Naive thymus-derived CD4-positive, alpha-beta T cell (primary cell): ENCODE measurements at regions of chr14 and their contacts with region 1.

Region 1: DNA sequence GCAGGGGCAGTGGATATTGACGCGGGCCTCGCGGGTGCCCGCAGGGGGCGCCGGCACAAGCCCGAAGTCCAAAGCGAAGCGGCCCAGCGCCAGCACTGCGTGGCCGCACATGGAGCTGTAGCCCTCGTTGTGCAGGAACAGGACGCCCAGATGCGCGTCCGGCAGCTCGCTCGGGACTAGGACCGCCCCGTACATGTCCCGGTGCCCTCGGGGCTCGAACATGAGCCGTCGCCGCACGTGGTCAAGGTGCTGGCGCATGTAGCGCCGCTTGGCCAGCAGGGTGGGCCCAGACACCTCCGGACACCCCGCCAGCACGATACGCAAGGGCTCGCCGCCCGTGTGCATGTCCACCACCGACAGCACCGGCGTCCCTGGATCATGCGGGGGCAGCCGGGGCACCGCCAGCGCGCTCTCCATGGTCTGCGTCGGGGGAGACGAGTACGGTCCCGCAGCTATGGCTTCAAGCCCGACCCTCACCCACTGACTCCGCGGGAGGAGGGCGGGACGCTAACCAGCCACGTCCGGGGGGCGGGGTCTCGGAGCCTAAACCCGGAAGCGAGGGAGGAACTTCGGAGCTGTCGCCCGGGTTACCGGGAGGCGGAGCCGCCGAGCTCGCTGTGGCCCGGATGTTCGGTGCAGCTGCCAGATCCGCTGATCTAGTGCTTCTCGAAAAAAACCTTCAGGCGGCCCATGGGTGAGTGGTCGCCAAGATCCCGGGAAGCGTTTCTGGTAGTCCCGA is at the starts of genes JKAMP and L3HYPDH:
- DNase-seq: peak; percentile 93 to 98 (median 97)
- ATAC-seq: peak; percentile 97
- H3K4me3 ChIP-seq: peak within 1 kb of the TSS; percentile 81
- H3K4me3 Mint-ChIP-seq: peak within 1 kb of the TSS; percentile 89 to 98 (median 96)
- H3K27ac ChIP-seq: peak within 1 kb of the TSS; percentile 84
- H3K27ac Mint-ChIP-seq: peak within 1 kb of the TSS; percentile 85 to 96 (median 94)
- H3K4me1 ChIP-seq: peaks cover 18 to 20% of the 10 kb centered on the region in 2 donors
- H3K4me1 Mint-ChIP-seq: peaks cover 44 to 82% (median 76%) of the 10 kb centered on the region in 7 donors
- H3K27me3 ChIP-seq: no peaks in the 10 kb centered on the region
- H3K27me3 Mint-ChIP-seq: no peaks in the 10 kb centered on the region
- total RNA-seq, gene JKAMP: 12.2 to 33.7 (median 32.5) TPM
- total RNA-seq, gene L3HYPDH: 18.9 to 55.9 (median 24.2) TPM

Region 2: GRCh38 chr14:58244556-58245387 is 1239.3 kb before region 1 on chr14 and contains the start of gene PSMA3:
- CTCF ChIA-PET with region 1: no interaction called
- POLR2A ChIA-PET with region 1: no interaction called
- intact Hi-C with region 1: loop called in 1 of 2 experiments (anchors 10 kb)
- DNase-seq: peak; percentile 95 to 98 (median 98)
- ATAC-seq: peak; percentile 96
- H3K4me3 ChIP-seq: peak within 1 kb of the TSS; percentile 100
- H3K4me3 Mint-ChIP-seq: peak within 1 kb of the TSS; percentile 89 to 99 (median 96)
- H3K27ac ChIP-seq: peak within 1 kb of the TSS; percentile 86
- H3K27ac Mint-ChIP-seq: peak within 1 kb of the TSS; percentile 97 to 99 (median 98)
- H3K4me1 ChIP-seq: peaks cover 23 to 26% of the 10 kb centered on the region in 2 donors
- H3K4me1 Mint-ChIP-seq: peaks cover 27 to 61% (median 52%) of the 10 kb centered on the region in 7 donors
- H3K27me3 ChIP-seq: no peaks in the 10 kb centered on the region
- H3K27me3 Mint-ChIP-seq: peaks cover 0 to 1% (median 0%) of the 10 kb centered on the region in 5 donors
- total RNA-seq, gene PSMA3: 76.5 to 357 (median 97.1) TPM

Region 3: DNA sequence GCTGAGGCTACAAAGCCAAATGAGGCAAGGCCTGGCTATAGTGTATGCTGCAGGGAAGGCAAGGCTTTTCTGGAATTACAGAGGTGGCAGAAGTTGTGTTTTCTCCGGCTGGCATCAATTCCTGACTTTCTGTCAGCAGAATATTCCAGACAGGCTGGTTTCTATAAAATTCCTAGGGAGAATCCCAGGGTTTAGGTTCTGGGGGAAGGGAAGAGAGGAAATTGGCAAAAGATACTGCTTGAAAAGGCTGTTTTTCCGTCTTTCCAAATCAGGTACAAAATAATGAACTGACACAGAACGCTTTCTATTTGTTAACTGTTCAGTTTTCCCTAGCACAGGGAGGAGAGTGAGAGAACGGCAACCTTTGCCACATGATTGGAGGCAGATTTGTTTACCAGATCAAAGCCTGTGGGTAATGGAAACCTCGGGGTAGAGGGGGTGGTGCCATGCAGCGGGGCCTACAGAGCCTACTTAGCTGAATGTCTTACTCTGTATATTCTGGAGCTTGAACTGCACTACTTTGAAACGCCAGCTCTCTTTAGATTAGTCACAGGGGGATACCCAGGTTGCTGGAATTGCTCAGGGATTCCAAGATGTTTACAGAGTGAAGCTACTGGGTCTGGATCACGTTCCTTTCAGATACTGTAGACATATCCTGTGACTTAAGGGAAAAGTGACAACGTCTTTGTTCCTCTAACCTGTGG is 912.1 kb before region 1 on chr14:
- CTCF ChIA-PET with region 1: no interaction called
- POLR2A ChIA-PET with region 1: no interaction called
- intact Hi-C with region 1: loop called in 1 of 2 experiments (anchors 5 kb)
- DNase-seq: peak in 8 of 9 donors; percentile 41 to 80 (median 69)
- ATAC-seq: peak; percentile 87
- H3K4me3 ChIP-seq: no peak overlapping the region
- H3K4me3 Mint-ChIP-seq: peak overlapping the region; percentile 35 to 83 (median 70)
- H3K27ac ChIP-seq: peak overlapping the region; percentile 40
- H3K27ac Mint-ChIP-seq: peak overlapping the region; percentile 74 to 96 (median 93)
- H3K4me1 ChIP-seq: peaks cover 0 to 33% of the 10 kb centered on the region in 2 donors
- H3K4me1 Mint-ChIP-seq: peaks cover 14 to 67% (median 51%) of the 10 kb centered on the region in 7 donors
- H3K27me3 ChIP-seq: no peaks in the 10 kb centered on the region
- H3K27me3 Mint-ChIP-seq: no peaks in the 10 kb centered on the region

Region 4: DNA sequence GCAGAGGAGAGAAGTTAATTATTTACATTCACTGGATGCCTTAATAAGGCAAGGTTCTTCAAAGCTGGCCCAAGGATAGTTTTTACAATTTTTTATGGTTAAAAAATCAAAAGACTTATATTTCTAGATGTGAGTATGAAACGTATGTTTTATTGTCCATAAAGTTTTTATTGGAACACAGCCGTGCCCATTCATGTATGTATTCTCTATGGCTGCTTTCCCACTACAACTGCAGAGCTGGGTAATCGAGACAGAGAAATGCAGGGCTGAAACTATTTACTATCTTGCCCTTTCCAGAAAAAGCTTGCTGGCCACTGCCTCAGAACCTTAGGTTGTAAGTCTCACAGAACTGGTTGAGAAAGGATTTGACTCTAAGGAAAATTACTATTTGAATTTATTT is 16.7 kb after region 1 on chr14:
- CTCF ChIA-PET with region 1: no interaction called
- POLR2A ChIA-PET with region 1: interaction called, 3 read pairs
- intact Hi-C with region 1: loop called in 1 of 2 experiments (anchors 2 kb)
- DNase-seq: no peak
- ATAC-seq: no peak
- H3K4me3 ChIP-seq: no peak overlapping the region
- H3K4me3 Mint-ChIP-seq: no peak overlapping the region
- H3K27ac ChIP-seq: no peak overlapping the region
- H3K27ac Mint-ChIP-seq: peak overlapping the region in 1 of 9 donors; percentile 38
- H3K4me1 ChIP-seq: peaks cover 0 to 4% of the 10 kb centered on the region in 2 donors
- H3K4me1 Mint-ChIP-seq: peaks cover 11 to 37% (median 23%) of the 10 kb centered on the region in 7 donors
- H3K27me3 ChIP-seq: no peaks in the 10 kb centered on the region
- H3K27me3 Mint-ChIP-seq: no peaks in the 10 kb centered on the region

Region 5: GRCh38 chr14:59534361-59534987 is 50.4 kb after region 1 on chr14:
- CTCF ChIA-PET with region 1: no interaction called
- POLR2A ChIA-PET with region 1: no interaction called
- intact Hi-C with region 1: no loop called
- DNase-seq: no peak
- ATAC-seq: no peak
- H3K4me3 ChIP-seq: no peak overlapping the region
- H3K4me3 Mint-ChIP-seq: no peak overlapping the region
- H3K27ac ChIP-seq: no peak overlapping the region
- H3K27ac Mint-ChIP-seq: no peak overlapping the region
- H3K4me1 ChIP-seq: no peaks in the 10 kb centered on the region
- H3K4me1 Mint-ChIP-seq: no peaks in the 10 kb centered on the region
- H3K27me3 ChIP-seq: no peaks in the 10 kb centered on the region
- H3K27me3 Mint-ChIP-seq: peaks cover 9 to 25% (median 18%) of the 10 kb centered on the region in 5 donors

Region 6: GRCh38 chr14:59964251-59965007 is 480.4 kb after region 1 on chr14:
- CTCF ChIA-PET with region 1: no interaction called
- POLR2A ChIA-PET with region 1: no interaction called
- intact Hi-C with region 1: loop called in 1 of 2 experiments (anchors 10 kb)
- DNase-seq: peak in 6 of 9 donors; percentile 6 to 38 (median 20)
- ATAC-seq: peak; percentile 44
- H3K4me3 ChIP-seq: no peak overlapping the region
- H3K4me3 Mint-ChIP-seq: peak overlapping the region; percentile 77 to 95 (median 88)
- H3K27ac ChIP-seq: no peak overlapping the region
- H3K27ac Mint-ChIP-seq: peak overlapping the region in 8 of 9 donors; percentile 40 to 99 (median 88)
- H3K4me1 ChIP-seq: no peaks in the 10 kb centered on the region
- H3K4me1 Mint-ChIP-seq: peaks cover 3 to 14% (median 10%) of the 10 kb centered on the region in 7 donors
- H3K27me3 ChIP-seq: no peaks in the 10 kb centered on the region
- H3K27me3 Mint-ChIP-seq: peaks cover 0 to 15% (median 5%) of the 10 kb centered on the region in 5 donors

Region 7: DNA sequence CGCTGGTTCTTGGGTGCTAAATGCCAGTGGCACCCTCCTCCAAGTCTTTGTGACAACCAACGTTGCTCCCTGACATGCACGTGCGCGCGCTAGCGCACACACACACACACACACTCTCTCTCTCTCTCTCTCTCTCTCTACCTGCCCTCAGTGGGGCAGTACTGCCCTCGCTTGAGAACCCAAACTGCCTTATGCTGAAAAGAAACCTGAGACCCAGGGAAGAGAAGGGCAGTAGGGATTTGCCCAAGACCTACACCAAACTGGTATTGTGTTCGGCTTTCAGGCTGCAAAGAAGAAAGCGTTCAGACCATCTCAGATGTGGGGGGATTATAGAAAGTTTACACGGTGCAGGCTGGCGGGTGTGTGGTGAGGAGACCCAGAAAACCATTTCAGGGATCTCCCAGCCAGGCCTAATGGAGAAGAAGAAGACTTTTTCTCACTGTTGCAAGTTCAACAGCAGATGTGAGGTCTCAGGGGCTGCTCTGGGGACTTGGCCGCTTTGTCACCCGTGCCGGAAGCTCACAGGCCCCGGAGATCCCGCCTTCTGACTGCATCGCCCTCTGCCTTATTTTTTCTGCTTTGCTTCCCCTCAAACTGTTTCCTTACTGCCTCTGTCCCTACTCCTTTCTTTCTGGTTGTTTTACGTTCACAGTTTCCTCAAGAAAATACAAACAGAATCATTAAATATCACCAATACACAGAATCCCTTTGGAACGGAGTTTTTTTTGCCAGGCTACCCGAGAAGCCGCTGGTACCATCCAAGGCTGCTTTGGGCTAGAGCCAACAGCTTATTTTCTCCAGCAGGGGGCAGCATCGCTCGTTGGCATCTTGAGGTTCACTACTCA is 847.4 kb after region 1 on chr14:
- CTCF ChIA-PET with region 1: no interaction called
- POLR2A ChIA-PET with region 1: no interaction called
- intact Hi-C with region 1: loop called (anchors 2 to 5 kb)
- DNase-seq: peak; percentile 53 to 80 (median 74)
- ATAC-seq: peak; percentile 79
- H3K4me3 ChIP-seq: peak overlapping the region; percentile 55
- H3K4me3 Mint-ChIP-seq: peak overlapping the region; percentile 87 to 98 (median 96)
- H3K27ac ChIP-seq: peak overlapping the region; percentile 55
- H3K27ac Mint-ChIP-seq: peak overlapping the region; percentile 87 to 98 (median 92)
- H3K4me1 ChIP-seq: peaks cover 4 to 13% of the 10 kb centered on the region in 2 donors
- H3K4me1 Mint-ChIP-seq: peaks cover 12 to 46% (median 29%) of the 10 kb centered on the region in 7 donors
- H3K27me3 ChIP-seq: no peaks in the 10 kb centered on the region
- H3K27me3 Mint-ChIP-seq: peaks cover 15 to 44% (median 38%) of the 10 kb centered on the region in 5 donors